AG04449 (cell line): ENCODE measurements at regions of chr15 and their contacts with region 1.

Region 1: GRCh38 chr15:99123706-99124451 is 19.0 kb downstream of the SYNM start:
- DNase-seq: peak; percentile 89
- H3K4me3 ChIP-seq: peak overlapping the region; percentile 39
- CTCF ChIP-seq: no peak

Region 2: GRCh38 chr15:98954411-98954810 is 169.5 kb before region 1 on chr15:
- CTCF ChIA-PET with region 1: no interaction called
- POLR2A ChIA-PET with region 1: no interaction called
- DNase-seq: peak; percentile 87
- H3K4me3 ChIP-seq: no peak overlapping the region
- CTCF ChIP-seq: no peak

Region 3: GRCh38 chr15:99110581-99111320 is 13.1 kb before region 1 on chr15:
- CTCF ChIA-PET with region 1: interaction called, 19 read pairs
- POLR2A ChIA-PET with region 1: interaction called, 7 read pairs
- DNase-seq: no peak
- H3K4me3 ChIP-seq: no peak overlapping the region
- CTCF ChIP-seq: no peak

Region 4: DNA sequence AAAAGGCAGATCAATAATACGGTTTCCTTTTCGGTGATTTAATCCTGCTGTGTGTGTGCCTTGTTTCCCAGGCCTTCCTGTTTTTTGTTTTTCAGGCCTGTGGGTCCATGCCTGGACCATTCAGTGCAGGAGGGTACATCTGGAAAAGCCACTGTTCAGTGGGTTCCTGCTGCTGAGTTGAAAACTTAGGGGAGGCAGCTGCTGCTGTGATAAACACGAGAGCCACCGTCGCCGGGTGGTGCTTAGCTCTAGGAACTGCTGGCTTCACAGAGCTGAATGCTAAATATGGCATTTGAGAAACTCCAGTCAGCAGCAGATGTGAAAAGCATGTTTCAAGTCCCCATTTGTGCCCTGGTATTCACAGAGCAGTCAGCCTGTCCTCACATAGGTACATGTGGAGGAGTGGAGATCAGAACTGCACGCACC is 25.0 kb after region 1 on chr15:
- CTCF ChIA-PET with region 1: no interaction called
- POLR2A ChIA-PET with region 1: no interaction called
- DNase-seq: no peak
- H3K4me3 ChIP-seq: no peak overlapping the region
- CTCF ChIP-seq: no peak

Region 5: GRCh38 chr15:99213187-99213811 is 89.4 kb after region 1 on chr15:
- CTCF ChIA-PET with region 1: interaction called, 11 read pairs
- POLR2A ChIA-PET with region 1: no interaction called
- DNase-seq: peak; percentile 26
- H3K4me3 ChIP-seq: no peak overlapping the region
- CTCF ChIP-seq: peak; percentile 74